Pancreas (tissue), 10 donors: ENCODE measurements at regions of chr10 and their contacts with region 1.

Region 1: GRCh38 chr10:16011548-16011947 is 151.2 kb upstream of the MINDY3 start:
- DNase-seq: no peak
- ATAC-seq: no peak
- H3K4me3 ChIP-seq: no peak overlapping the region
- H3K27ac ChIP-seq: no peak overlapping the region
- H3K4me1 ChIP-seq: no peaks in the 10 kb centered on the region
- H3K27me3 ChIP-seq: no peaks in the 10 kb centered on the region
- CTCF ChIP-seq: no peak

Region 2: DNA sequence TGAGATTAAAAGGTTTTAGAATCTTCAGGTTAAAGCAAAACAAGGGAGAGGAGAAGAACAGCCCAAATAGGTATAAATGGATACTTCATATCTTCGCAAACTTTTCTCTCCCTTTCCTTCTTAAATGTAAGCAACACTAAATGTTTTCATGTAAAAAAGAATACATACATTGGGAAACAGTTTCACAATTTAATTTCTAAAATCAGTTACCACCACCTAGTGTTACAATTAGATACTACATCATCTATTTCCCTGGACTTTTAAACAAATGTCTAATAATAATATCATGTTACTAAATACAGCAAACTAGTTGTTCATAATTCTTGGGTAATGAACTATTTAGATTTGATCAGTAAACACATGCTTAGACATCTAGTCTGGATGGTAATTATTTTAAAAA is 187.1 kb before region 1 on chr10:
- intact Hi-C with region 1: loop called in 1 of 3 experiments (anchors 10 kb)
- DNase-seq: no peak
- ATAC-seq: peak in 1 of 4 donors; percentile 22
- H3K4me3 ChIP-seq: no peak overlapping the region
- H3K27ac ChIP-seq: no peak overlapping the region
- H3K4me1 ChIP-seq: no peaks in the 10 kb centered on the region
- H3K27me3 ChIP-seq: no peaks in the 10 kb centered on the region
- CTCF ChIP-seq: peak in 2 of 4 donors; percentile 23 to 35